Caco-2 (cell line): ENCODE measurements at regions of chr2 and their contacts with region 1.

Region 1: DNA sequence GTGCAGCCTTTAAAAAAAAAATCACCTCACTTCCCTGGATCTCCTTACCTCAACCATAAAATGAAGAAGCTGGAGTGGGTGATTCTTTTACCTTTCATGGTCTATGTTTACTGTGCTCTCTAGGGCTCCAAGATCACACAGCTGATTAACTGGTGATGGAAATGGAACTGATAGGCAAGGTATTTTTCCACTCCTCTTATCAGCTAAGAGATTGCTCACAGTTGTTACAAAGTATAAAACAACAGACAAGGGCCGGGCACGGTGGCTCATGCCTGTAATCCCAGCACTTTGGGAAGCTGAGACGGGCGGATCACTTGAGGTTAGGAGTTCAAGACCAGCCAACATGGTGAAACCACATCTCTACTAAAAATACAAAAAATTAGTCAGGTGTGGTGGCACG is 14.5 kb downstream of the RPS27A start:
- DNase-seq: peak; percentile 62 to 66
- H3K4me3 ChIP-seq: no peak overlapping the region
- H3K4me3 Mint-ChIP-seq: no peak overlapping the region
- H3K27ac Mint-ChIP-seq: peak overlapping the region; percentile 2
- H3K4me1 ChIP-seq: peaks cover 12% of the 10 kb centered on the region
- H3K4me1 Mint-ChIP-seq: peaks cover 20% of the 10 kb centered on the region
- H3K27me3 ChIP-seq: no peaks in the 10 kb centered on the region
- H3K27me3 Mint-ChIP-seq: no peaks in the 10 kb centered on the region
- CTCF ChIP-seq: no peak

Region 2: GRCh38 chr2:55213822-55214221 is 33.2 kb before region 1 on chr2:
- CTCF ChIA-PET with region 1: no interaction called
- POLR2A ChIA-PET with region 1: no interaction called
- intact Hi-C with region 1: loop called (anchors 1 kb)
- DNase-seq: no peak
- H3K4me3 ChIP-seq: no peak overlapping the region
- H3K4me3 Mint-ChIP-seq: no peak overlapping the region
- H3K27ac Mint-ChIP-seq: no peak overlapping the region
- H3K4me1 ChIP-seq: no peaks in the 10 kb centered on the region
- H3K4me1 Mint-ChIP-seq: peaks cover 7% of the 10 kb centered on the region
- H3K27me3 ChIP-seq: no peaks in the 10 kb centered on the region
- H3K27me3 Mint-ChIP-seq: no peaks in the 10 kb centered on the region
- CTCF ChIP-seq: no peak